ENCODE measurements at regions of chr1 and their contacts with region 1.

Region 1: DNA sequence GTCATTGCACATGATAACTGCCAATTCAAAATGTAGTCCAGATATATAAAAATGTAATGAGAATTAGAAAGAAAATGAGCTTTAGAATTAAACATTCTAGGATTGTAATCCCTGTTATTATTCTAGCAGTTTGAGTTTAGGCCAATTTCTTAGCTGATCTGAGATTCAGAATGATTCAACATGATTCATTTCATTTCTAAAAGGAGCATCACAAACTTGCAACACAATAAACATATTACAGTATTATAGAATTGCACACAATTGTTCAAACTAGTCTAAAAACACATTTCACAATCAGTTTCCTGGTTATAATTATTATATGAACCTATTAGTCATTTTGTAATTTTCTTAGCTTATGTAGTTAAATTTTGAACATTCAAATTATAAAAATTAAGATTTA is 43.3 kb upstream of the TSHB start:
- DNase-seq: no peak
- ATAC-seq: no peak
- H3K4me3 ChIP-seq: no peak overlapping the region
- H3K27ac ChIP-seq: no peak overlapping the region
- H3K4me1 ChIP-seq: no peaks in the 10 kb centered on the region
- H3K27me3 ChIP-seq: no peaks in the 10 kb centered on the region

Region 2: GRCh38 chr1:114948982-114949381 is 37.3 kb before region 1 on chr1:
- intact Hi-C with region 1: no loop called
- DNase-seq: no peak
- ATAC-seq: no peak
- H3K4me3 ChIP-seq: no peak overlapping the region
- H3K27ac ChIP-seq: no peak overlapping the region
- H3K4me1 ChIP-seq: no peaks in the 10 kb centered on the region
- H3K27me3 ChIP-seq: peaks cover 0 to 2% of the 10 kb centered on the region in 2 donors

Region 3: DNA sequence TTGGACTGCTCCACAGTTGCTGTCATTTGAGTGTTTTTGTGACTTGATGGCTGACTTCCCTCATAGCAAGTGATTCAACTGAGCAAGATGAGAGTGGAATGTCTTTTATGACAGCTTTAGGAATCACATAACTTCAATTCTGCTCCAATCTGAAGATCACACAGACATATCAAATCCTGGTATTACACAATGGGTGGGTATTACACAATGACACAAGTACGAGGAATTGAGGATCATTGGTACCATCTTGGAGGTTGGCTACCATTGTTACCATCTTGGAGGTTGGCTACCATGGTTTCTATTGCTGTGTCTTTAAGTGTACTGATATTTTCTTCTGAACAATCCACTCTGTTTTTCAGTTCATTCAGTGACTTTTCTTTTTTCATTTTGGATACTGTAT is 34.9 kb after region 1 on chr1:
- intact Hi-C with region 1: no loop called
- DNase-seq: no peak
- ATAC-seq: no peak
- H3K4me3 ChIP-seq: no peak overlapping the region
- H3K27ac ChIP-seq: no peak overlapping the region
- H3K4me1 ChIP-seq: no peaks in the 10 kb centered on the region
- H3K27me3 ChIP-seq: no peaks in the 10 kb centered on the region

Region 4: DNA sequence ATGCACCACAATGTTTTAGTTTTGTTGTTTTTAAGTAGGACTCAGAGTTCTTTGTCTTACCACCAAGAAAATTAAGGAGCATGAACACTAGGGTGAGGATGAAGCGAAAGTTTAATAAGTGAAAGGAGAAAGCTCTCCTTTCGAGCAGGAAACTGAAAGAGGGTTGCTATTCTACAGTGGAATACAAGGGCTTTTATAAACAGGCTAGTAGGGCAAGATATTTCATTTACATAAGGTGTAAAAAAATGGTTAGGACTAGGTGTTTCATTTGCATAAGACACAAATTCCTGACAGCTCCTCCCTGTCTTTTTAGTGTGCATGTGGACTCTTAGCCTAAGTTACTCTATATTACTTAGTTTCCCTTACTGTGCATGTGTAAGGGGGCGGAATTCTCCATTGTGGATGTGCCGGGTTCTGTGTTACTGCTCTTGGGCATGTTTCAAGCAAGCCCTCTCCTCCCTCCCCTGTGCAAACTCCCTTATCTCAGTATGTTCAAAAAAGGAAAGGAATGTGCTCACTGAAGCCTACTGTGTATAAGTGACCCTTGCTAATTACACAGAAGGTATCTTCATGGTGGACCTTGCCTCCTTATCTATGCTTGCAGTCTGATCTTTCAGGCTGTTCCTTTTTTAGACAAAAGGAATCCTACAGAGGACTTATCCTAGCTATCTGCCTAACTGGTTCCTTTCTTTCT is 50.7 kb after region 1 on chr1:
- intact Hi-C with region 1: loop called in 1 of 2 experiments (anchors 10 kb)
- DNase-seq: no peak
- ATAC-seq: no peak
- H3K4me3 ChIP-seq: no peak overlapping the region
- H3K27ac ChIP-seq: no peak overlapping the region
- H3K4me1 ChIP-seq: peaks cover 3 to 10% of the 10 kb centered on the region in 2 donors
- H3K27me3 ChIP-seq: no peaks in the 10 kb centered on the region

Measured in aorta (tissue), 5 donors.